ENCODE measurements at regions of chr20 and their contacts with region 1.

Region 1: GRCh38 chr20:49338061-49338460 is 60.2 kb upstream of the ZNFX1 start:
- DNase-seq: no peak
- H3K4me3 ChIP-seq: no peak overlapping the region
- H3K27ac ChIP-seq: no peak overlapping the region
- H3K4me1 ChIP-seq: peaks cover 0 to 2% of the 10 kb centered on the region in 2 experiments; a peak in 1 of 4 replicates
- H3K27me3 ChIP-seq: no peaks in the 10 kb centered on the region
- CTCF ChIP-seq: no peak
- EP300 ChIP-seq: no peak
- RAD21 ChIP-seq: no peak

Region 2: GRCh38 chr20:49352751-49353150 is 14.7 kb after region 1 on chr20:
- CTCF ChIA-PET with region 1: interaction called, 11 read pairs
- POLR2A ChIA-PET with region 1: no interaction called
- DNase-seq: no peak
- H3K4me3 ChIP-seq: no peak overlapping the region
- H3K27ac ChIP-seq: no peak overlapping the region
- H3K4me1 ChIP-seq: peaks cover 0 to under 1% of the 10 kb centered on the region in 2 experiments; a peak in 1 of 4 replicates
- H3K27me3 ChIP-seq: no peaks in the 10 kb centered on the region
- CTCF ChIP-seq: no peak
- EP300 ChIP-seq: no peak
- RAD21 ChIP-seq: no peak

Region 3: DNA sequence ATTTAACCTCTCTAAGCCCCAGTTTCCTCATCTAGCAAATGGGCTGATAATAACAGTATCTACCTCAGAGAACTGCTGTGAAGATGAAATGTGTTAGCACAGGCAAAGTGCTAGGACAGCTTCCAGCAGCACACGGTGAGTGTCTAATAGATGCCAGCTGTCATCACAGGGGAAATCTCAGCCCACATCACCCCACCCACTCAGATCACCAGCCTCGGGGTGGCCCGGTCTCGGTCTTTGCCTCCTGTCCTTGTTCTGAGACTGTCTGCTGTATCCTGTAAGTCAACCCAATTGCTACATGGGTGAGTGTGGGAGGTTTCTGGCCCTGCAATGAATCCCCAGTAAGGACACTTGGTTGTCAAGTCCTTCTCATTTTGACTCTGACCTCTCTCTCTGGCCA is 39.3 kb after region 1 on chr20:
- CTCF ChIA-PET with region 1: interaction called, 76 read pairs
- POLR2A ChIA-PET with region 1: no interaction called
- DNase-seq: peak; percentile 48
- H3K4me3 ChIP-seq: no peak overlapping the region
- H3K27ac ChIP-seq: no peak overlapping the region
- H3K4me1 ChIP-seq: peaks cover 0 to 30% of the 10 kb centered on the region in 2 experiments; a peak in 2 of 4 replicates
- H3K27me3 ChIP-seq: no peaks in the 10 kb centered on the region
- CTCF ChIP-seq: no peak
- EP300 ChIP-seq: peak in 1 of 2 experiments; percentile 36; a peak in 1 of 4 replicates
- RAD21 ChIP-seq: 0 out of 2 replicates have a peak, but pooled peaks have one; percentile 14

Region 4: GRCh38 chr20:49496553-49497397 is 158.7 kb after region 1 on chr20:
- CTCF ChIA-PET with region 1: interaction called, 12 read pairs
- POLR2A ChIA-PET with region 1: no interaction called
- DNase-seq: no peak
- H3K4me3 ChIP-seq: no peak overlapping the region
- H3K27ac ChIP-seq: no peak overlapping the region
- H3K4me1 ChIP-seq: no peaks in the 10 kb centered on the region
- H3K27me3 ChIP-seq: peaks cover 12% of the 10 kb centered on the region
- CTCF ChIP-seq: no peak
- EP300 ChIP-seq: no peak
- RAD21 ChIP-seq: no peak

Region 5: GRCh38 chr20:49534255-49534712 is 196.2 kb after region 1 on chr20:
- CTCF ChIA-PET with region 1: interaction called, 104 read pairs
- POLR2A ChIA-PET with region 1: no interaction called
- DNase-seq: peak; percentile 79
- H3K4me3 ChIP-seq: no peak overlapping the region
- H3K27ac ChIP-seq: no peak overlapping the region
- H3K4me1 ChIP-seq: peaks cover 0 to 5% of the 10 kb centered on the region in 2 experiments; a peak in 1 of 4 replicates
- H3K27me3 ChIP-seq: no peaks in the 10 kb centered on the region
- CTCF ChIP-seq: peak; percentile 80
- EP300 ChIP-seq: no peak; a peak in 1 of 4 replicates
- RAD21 ChIP-seq: peak; percentile 85